HCT116 (cell line): ENCODE measurements at regions of chr7 and their contacts with region 1.

Region 1: DNA sequence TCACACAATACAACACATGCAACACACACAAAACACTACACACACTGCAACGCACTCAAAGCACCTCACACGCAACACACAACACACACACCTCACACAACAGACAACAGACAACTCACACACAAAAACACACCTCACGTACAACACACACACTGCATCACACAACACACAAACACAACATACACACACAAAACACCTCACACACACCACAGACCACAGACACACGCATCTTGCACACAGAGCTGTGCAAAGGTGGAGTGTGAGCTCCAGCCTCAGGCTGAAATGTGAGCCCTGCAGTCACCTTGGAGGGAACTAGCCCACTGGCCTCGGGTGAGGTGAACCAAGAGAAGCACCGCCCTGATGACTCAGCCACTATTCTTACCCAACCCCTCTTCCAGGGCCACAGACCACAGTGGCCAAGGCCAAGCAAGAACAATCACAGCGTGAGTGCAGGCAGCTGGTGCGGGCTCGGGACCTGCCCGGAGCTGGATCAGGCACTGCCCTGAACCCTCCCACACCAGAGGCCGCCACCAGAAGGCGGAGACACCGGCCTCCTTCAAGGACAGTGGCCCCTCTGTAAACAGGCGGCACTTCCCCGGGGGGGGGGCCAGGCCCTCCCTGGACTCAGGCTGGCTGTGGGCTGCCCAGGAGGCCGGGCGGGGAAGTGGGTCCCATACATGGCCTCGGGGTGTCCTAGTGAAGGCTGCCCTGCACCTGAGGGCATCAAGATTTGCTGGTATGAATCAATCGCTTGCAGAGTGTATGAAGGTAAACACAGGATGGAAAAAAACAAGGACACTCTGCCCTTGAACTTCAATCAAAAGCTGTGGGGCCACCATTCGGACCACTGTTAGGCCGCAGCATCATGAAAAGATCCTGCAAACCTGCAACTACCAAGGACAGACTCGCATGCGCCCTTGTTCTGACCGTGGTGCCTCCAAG is 106.7 kb downstream of the TNS3 start:
- DNase-seq: peak; percentile 91
- ATAC-seq: peak; percentile 90
- H3K4me3 ChIP-seq: peak overlapping the region; percentile 5 to 48; a peak in 2 of 4 replicates
- H3K27ac ChIP-seq: peak overlapping the region; percentile 81
- H3K4me1 ChIP-seq: peaks cover 81 to 88% of the 10 kb centered on the region in 2 experiments
- H3K27me3 ChIP-seq: no peaks in the 10 kb centered on the region
- CTCF ChIP-seq: 0 out of 6 replicates have a peak, but pooled peaks of 1 of the 3 experiments have one; percentile 5
- POLR2A ChIP-seq: peak; percentile 38
- RAD21 ChIP-seq: peak; percentile 53; the same call in 1 of the 2 replicates

Region 2: DNA sequence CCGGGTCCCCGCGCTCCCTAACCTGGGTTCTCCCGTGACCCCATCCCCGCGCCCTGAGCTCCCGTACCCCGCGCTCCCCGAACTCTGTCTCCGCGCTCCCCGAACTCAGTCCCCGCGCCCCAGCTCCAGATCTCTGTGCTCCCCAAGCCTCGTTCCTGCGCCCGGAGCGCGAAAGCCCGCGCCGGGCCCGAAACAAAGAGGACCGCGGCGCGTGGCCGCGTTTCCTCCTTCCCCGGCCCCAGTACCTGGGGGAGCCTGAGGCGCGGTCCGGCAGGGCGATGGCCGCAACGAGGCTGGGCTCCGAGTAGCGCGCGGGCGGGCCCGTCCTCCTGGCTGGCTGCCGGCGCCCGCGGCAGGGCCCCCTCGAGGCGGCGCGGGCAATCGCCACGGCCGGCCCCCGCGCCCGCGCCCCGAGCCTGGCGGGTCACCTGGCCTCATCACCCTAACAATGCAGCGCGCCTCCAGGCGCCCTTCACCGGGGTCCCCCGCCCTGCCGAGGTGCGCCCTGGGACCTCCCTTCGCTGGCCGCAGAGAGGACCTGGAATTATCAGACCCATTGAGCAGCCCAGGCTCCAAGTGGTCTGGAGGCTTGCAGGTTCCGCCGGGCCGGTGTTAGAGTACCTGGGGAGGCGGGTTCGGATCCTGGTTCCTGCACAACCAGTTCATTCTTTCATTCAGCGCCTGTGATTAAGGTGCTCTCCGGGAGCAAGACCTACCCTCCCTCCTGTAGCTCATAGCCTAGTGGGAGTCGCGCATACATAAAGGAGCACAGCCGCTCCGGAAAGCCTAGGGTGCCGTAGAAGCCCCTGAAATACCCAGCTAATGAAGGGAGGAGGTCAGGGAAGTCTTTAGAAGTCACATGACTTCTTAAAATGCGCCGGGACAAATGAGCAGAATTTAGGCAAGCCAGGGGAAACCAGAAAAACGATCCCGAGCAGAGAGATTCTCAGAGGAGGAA is 106.9 kb after region 1 on chr7 and contains the start of gene TNS3:
- CTCF ChIA-PET with region 1: no interaction called
- POLR2A ChIA-PET with region 1: no interaction called
- RAD21 ChIA-PET with region 1: no interaction called
- intact Hi-C with region 1: loop called (anchors 5 kb)
- DNase-seq: no peak
- ATAC-seq: peak; percentile 83
- H3K4me3 ChIP-seq: peak within 1 kb of the TSS; percentile 63 to 81
- H3K27ac ChIP-seq: peak within 1 kb of the TSS; percentile 76; the same call in 1 of the 2 replicates
- H3K4me1 ChIP-seq: peaks cover 25 to 26% of the 10 kb centered on the region in 2 experiments
- H3K27me3 ChIP-seq: no peaks in the 10 kb centered on the region
- CTCF ChIP-seq: no peak
- POLR2A ChIP-seq: peak; percentile 44
- RAD21 ChIP-seq: no peak
- total RNA-seq, gene TNS3: 9.1 TPM

Region 3: DNA sequence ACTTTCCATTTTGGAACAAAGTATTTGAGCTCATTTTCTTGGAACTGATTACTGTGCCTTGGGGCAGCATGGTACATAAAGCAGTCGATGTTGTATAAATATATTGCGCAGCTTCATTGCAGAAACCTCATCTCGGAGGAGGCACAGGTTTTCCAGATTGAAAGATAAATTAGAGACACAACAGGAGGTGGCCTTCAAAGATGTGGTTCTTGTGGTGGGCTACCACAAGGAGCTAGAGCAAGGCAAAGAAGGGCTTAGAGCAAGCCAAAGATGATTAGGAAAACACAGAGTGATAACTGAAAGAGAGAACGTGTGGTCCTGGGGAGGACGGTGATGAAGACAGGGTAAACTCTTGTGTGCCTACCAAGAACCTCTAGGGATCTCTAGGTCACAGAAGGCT is 275.8 kb after region 1 on chr7:
- CTCF ChIA-PET with region 1: no interaction called
- POLR2A ChIA-PET with region 1: no interaction called
- RAD21 ChIA-PET with region 1: no interaction called
- intact Hi-C with region 1: no loop called
- DNase-seq: no peak
- ATAC-seq: no peak
- H3K4me3 ChIP-seq: no peak overlapping the region
- H3K27ac ChIP-seq: no peak overlapping the region
- H3K4me1 ChIP-seq: no peaks in the 10 kb centered on the region
- H3K27me3 ChIP-seq: no peaks in the 10 kb centered on the region
- CTCF ChIP-seq: no peak
- POLR2A ChIP-seq: no peak
- RAD21 ChIP-seq: no peak